ENCODE measurements at regions of chr17 and their contacts with region 1.

Region 1: DNA sequence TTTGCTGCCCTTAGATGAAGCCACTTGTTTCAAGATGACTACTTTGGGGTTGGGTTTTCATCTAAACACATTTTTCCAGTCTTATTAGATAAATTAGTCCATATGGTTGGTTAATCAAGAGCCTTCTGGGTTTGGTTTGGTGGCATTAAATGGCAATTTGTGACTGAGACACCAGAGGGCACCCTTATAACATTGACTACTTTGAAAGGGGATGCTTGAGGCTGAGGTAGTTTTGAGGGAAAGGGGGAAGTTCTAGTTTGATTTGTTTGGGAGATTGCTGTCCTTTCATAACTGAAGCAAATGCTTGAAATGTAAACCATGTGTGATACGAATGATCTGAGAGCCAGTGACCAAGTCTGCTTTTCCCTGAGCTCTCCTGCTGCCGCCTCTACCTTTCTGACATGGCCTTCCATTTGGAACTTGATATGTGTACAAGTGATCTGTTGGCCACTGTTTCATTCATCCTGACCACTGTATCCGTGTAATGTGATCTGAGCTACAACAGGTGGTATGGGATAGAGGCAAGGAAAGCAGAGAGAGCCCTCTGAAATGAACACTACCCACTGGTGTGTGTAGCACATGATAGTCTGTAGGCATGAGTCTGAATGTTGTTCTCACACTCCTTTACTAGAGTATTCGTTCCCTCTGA is 5.8 kb upstream of the RARA start:
- DNase-seq: peak; percentile 71
- H3K4me3 Mint-ChIP-seq: no peak overlapping the region
- H3K27ac Mint-ChIP-seq: no peak overlapping the region
- H3K4me1 Mint-ChIP-seq: peaks cover 14% of the 10 kb centered on the region
- H3K27me3 Mint-ChIP-seq: no peaks in the 10 kb centered on the region

Region 2: DNA sequence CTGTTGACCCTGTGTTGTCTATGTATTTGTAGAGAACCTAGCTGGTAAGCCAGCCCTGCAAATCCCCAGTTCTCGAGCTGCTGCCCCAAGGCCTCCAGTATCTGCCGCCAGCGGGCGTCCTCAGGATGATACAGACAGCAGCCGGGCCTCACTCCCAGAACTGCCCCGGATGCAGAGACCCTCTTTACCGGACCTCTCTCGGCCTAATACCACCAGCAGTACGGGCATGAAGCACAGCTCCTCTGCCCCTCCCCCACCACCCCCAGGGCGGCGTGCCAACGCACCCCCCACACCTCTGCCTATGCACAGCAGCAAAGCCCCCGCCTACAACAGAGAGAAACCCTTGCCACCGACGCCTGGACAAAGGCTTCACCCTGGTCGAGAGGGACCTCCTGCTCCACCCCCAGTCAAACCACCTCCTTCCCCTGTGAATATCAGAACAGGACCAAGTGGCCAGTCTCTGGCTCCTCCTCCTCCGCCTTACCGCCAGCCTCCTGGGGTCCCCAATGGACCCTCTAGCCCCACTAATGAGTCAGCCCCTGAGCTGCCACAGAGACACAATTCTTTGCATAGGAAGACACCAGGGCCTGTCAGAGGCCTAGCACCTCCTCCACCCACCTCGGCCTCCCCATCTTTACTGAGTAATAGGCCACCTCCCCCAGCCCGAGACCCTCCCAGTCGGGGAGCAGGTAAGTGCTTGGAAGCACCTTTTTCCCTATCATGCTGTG is 38.5 kb before region 1 on chr17:
- CTCF ChIA-PET with region 1: no interaction called
- DNase-seq: no peak
- H3K4me3 Mint-ChIP-seq: no peak overlapping the region
- H3K27ac Mint-ChIP-seq: no peak overlapping the region
- H3K4me1 Mint-ChIP-seq: no peaks in the 10 kb centered on the region
- H3K27me3 Mint-ChIP-seq: no peaks in the 10 kb centered on the region

Region 3: GRCh38 chr17:40287494-40288369 is 15.4 kb before region 1 on chr17 and contains the start of gene CDC6:
- CTCF ChIA-PET with region 1: interaction called, 20 read pairs
- DNase-seq: peak; percentile 99
- H3K4me3 Mint-ChIP-seq: peak within 1 kb of the TSS; percentile 100
- H3K27ac Mint-ChIP-seq: peak within 1 kb of the TSS; percentile 98
- H3K4me1 Mint-ChIP-seq: peaks cover 53% of the 10 kb centered on the region
- H3K27me3 Mint-ChIP-seq: peaks cover 3% of the 10 kb centered on the region

Region 4: GRCh38 chr17:40317880-40318829 is 15.0 kb after region 1 on chr17:
- CTCF ChIA-PET with region 1: interaction called, 37 read pairs
- DNase-seq: peak; percentile 93
- H3K4me3 Mint-ChIP-seq: peak overlapping the region; percentile 94
- H3K27ac Mint-ChIP-seq: peak overlapping the region; percentile 91
- H3K4me1 Mint-ChIP-seq: peaks cover 68% of the 10 kb centered on the region
- H3K27me3 Mint-ChIP-seq: no peaks in the 10 kb centered on the region

Region 5: DNA sequence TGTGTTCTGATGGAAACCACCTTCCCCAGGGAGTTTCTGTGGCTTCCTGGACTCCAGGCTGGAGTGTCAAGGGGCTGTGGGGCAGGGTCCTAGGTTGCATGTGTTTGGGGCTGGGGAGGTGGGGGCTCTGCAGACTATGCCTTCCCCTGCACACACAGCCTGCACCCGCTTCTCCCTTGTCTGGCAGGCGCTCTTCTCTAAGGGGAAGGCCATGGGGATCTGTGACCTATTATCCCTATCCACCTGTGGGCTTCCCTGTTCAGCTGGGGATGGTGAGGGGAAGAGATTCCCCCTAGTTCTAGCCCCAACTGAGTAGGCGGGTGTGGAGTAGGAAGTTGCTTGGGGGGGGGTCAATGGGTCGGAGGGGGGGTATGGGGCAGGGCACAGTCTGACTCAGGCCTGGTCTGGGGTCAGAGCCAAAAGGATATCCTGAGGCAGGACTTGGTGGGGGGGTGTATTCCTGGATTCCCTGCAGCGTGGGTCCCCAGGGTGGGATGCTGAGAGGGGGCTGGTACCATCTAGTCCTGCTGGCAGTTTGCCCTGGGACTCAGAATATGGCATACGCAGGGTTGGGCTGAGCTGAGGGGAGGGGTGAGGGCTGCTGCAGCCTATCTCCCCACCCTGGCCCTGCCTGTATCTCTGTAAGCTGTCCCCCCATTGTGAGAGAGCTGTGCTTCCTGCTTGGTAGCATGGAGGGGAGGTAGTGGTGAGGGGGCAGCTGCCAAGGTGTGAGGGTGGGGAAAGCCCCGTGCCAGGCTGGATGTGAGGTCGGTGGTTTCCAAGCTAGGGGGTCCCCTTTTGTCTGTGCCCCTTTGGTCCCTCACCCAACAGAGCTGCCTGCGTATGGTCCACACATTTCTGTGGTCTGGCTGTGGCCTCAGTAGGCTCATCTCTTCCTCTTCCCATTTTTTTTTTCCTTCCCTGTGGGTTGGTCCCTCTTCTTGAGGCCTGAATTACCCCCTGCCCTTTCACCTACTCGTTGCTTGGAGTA is 20.6 kb after region 1 on chr17:
- CTCF ChIA-PET with region 1: interaction called, 12 read pairs
- DNase-seq: peak; percentile 70
- H3K4me3 Mint-ChIP-seq: peak overlapping the region; percentile 94
- H3K27ac Mint-ChIP-seq: peak overlapping the region; percentile 91
- H3K4me1 Mint-ChIP-seq: peaks cover 84% of the 10 kb centered on the region
- H3K27me3 Mint-ChIP-seq: no peaks in the 10 kb centered on the region

Region 6: DNA sequence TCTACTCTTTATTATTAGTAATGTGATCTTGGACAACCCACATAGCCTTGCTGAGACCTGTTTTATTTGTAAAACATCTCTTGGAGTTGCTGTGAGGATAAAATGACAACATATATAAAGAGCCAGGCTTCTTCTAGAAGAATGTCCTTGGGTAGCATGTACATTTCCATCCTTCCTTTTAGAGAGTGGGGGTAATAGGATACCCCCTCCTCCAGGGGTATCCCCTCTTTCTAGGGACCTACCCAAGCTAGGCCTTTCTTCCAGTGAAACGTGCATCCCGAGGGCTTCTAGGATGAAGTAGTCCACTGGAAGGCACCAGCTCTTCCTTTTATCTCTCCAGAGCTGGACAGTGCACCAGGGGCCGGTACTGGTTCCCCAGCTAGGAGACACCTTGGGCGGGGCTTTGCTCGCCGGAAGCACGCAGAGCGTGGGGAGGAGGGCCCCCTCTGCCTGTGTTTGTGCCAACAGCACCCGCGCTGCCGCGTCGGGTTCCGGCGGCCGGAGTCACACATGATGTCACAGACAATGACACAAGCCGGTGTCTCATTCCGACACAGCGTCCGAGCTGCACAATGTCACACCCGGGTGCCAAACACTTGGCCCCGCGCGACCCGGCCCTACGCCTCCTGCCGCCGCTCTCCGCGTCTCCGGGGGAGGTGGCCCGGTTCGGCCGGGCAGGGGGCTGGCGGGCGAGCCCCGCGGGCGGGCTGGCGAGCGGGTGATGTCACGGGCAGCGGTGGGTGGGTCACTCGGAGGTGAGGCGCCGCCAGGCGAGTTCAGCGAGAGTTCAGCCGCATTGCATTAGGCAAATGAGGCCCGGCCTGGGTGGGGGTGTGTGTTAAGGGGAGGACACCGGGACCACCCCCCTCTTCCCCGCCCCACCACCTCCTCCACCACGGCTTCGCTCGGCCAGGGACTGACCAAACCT is 38.0 kb after region 1 on chr17:
- CTCF ChIA-PET with region 1: interaction called, 15 read pairs
- DNase-seq: peak; percentile 91
- H3K4me3 Mint-ChIP-seq: peak overlapping the region; percentile 66
- H3K27ac Mint-ChIP-seq: peak overlapping the region; percentile 88
- H3K4me1 Mint-ChIP-seq: peaks cover 80% of the 10 kb centered on the region
- H3K27me3 Mint-ChIP-seq: no peaks in the 10 kb centered on the region

Region 7: DNA sequence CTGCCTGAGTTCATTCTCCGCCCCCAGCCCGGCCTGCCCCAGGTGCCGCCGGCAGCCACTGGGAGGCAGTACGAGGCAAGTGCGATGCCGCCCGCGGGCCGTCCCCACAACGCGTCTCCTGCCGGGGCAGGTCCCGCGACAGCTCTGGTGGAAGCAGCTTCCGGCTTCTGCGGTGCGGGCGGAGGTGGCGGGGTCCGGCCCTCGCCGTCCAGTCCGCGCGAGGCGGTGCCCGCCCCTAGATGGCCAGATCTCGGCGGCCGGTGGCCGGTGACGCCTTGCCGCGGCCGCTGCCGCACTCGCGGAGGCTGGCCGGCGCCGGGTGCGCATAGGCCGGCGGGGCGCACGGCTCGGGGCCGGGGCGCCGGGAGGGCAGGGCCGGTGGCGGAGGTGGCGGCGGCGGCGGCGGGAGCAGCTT is 59.6 kb after region 1 on chr17:
- CTCF ChIA-PET with region 1: interaction called, 370 read pairs
- DNase-seq: peak; percentile 93
- H3K4me3 Mint-ChIP-seq: peak overlapping the region; percentile 77
- H3K27ac Mint-ChIP-seq: peak overlapping the region; percentile 46
- H3K4me1 Mint-ChIP-seq: peaks cover 48% of the 10 kb centered on the region
- H3K27me3 Mint-ChIP-seq: peaks cover 36% of the 10 kb centered on the region

Region 8: GRCh38 chr17:40387680-40388079 is 84.5 kb after region 1 on chr17:
- CTCF ChIA-PET with region 1: no interaction called
- DNase-seq: no peak
- H3K4me3 Mint-ChIP-seq: no peak overlapping the region
- H3K27ac Mint-ChIP-seq: no peak overlapping the region
- H3K4me1 Mint-ChIP-seq: no peaks in the 10 kb centered on the region
- H3K27me3 Mint-ChIP-seq: no peaks in the 10 kb centered on the region

Region 9: GRCh38 chr17:40433551-40434415 is 130.7 kb after region 1 on chr17:
- CTCF ChIA-PET with region 1: no interaction called
- DNase-seq: peak; percentile 57
- H3K4me3 Mint-ChIP-seq: no peak overlapping the region
- H3K27ac Mint-ChIP-seq: no peak overlapping the region
- H3K4me1 Mint-ChIP-seq: peaks cover 17% of the 10 kb centered on the region
- H3K27me3 Mint-ChIP-seq: peaks cover 66% of the 10 kb centered on the region

Measured in activated naive CD4-positive, alpha-beta T cell treated with anti-CD3 and anti-CD28 coated beads, Interleukin-2, amount 10 ng/mL, durations not matched to agents 7 days and 5 days (primary cell).